ENCODE measurements at regions of chr13 and their contacts with region 1.

Region 1: DNA sequence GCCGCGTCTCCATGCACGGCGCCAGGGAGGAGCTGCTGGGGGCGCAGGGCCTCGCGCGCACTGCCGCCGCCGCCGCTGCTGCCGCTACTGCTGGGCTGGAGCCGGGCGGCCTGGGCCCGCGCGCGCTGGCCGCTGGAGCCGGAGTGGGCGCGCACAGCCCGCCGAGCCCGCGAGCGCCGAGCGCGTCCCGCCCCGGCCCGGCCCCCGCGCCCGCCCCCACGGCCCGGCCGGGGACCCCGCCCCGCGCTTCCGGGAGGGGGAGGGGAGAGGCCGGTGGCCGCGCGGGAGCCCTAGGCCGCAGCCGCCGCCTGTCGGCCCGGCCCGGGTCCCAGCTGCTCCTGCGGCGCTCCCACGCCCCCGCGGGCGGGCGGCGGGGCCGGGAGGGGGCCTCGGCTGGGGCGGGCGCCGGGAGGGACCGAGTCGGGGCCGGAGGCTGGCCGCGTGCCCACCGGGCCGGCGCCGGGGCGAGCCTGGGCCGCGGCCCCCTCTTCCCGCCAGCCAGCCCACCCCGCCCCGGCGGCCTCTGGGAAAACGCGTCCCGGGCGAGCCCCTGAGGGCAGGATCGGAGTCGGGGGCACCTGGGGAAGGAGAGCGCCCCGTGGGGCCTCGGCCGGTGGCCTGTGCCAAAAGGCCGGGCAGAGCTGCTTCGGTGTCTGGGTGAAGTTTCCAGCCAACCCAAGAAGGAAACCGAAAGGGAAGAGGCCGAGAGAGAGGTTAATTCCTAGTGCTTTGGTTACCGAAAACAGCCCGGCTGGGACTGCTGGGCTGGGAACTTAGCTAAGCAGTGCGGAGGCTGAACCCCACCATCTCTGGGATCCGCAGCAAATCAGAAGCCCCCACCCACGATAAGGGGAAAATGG is at the start of gene STK24:
- DNase-seq: peak; percentile 94
- H3K4me3 ChIP-seq: peak within 1 kb of the TSS; percentile 78 to 94 (median 87)
- H3K27ac ChIP-seq: peak within 1 kb of the TSS; percentile 93 to 97 (median 95)
- H3K4me1 ChIP-seq: peaks cover 24 to 71% (median 47%) of the 10 kb centered on the region in 6 donors
- H3K27me3 ChIP-seq: no peaks in the 10 kb centered on the region
- CTCF ChIP-seq: no peak
- POLR2A ChIP-seq: peak in 1 of 3 donors; percentile 37
- total RNA-seq, gene STK24: 87.5 to 132 (median 99.7) TPM

Region 2: GRCh38 chr13:98476538-98476966 is 100.6 kb before region 1 on chr13:
- intact Hi-C with region 1: loop called (anchors 10 kb)
- DNase-seq: peak; percentile 92
- H3K4me3 ChIP-seq: peak overlapping the region in 2 of 8 donors; percentile 4 to 37
- H3K27ac ChIP-seq: peak overlapping the region; percentile 25 to 82 (median 74)
- H3K4me1 ChIP-seq: peaks cover 34 to 83% (median 69%) of the 10 kb centered on the region in 6 donors
- H3K27me3 ChIP-seq: no peaks in the 10 kb centered on the region
- CTCF ChIP-seq: no peak
- POLR2A ChIP-seq: no peak

Measured in spleen (tissue), 13 donors.